ENCODE measurements at regions of chr11 and their contacts with region 1.

Region 1: DNA sequence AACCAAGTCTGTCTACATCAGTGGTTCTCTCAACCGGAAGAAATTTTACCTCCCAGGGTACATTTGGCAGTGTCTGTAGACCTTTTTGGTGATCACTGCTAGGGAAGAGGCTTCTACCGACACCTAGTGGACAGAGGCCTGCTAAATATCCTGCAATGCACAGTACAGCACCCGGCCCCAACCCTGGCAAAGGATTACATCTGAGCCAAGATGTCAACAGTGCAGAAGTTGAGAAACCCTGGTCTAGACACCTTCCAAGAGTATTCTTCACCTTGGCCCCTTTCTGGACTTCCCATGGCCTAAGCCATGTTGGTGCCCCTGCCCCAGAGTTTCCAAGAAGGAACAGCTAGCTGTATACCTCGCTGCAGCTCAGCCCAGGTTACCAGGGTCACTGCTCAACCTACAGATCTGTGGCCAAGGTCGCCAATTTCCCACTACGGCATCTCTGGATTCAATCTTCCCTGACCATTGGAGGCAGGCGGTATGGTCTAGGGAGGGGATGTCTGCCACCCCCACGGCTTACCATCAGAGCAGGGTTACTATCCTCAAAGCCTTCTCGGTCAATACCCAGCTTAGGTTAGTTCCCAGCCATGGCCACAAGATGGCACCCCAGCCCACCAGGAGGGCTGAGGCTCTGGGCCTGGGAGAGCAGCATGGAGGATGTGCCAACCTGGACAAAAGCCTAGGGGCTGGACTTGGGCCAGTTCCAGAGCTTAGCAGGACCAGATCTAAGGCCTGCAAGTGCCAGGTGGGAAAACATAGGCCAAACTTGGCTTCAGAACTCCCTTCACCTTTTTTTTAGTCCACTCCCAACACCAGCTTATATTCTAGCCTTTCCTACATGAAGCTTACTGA is 3.7 kb upstream of the KCNC1 start:
- DNase-seq: peak; percentile 90
- H3K4me3 Mint-ChIP-seq: no peak overlapping the region
- H3K27ac Mint-ChIP-seq: no peak overlapping the region
- H3K4me1 Mint-ChIP-seq: no peaks in the 10 kb centered on the region
- H3K27me3 Mint-ChIP-seq: peaks cover 44% of the 10 kb centered on the region
- CTCF ChIP-seq: peak; percentile 94

Region 2: DNA sequence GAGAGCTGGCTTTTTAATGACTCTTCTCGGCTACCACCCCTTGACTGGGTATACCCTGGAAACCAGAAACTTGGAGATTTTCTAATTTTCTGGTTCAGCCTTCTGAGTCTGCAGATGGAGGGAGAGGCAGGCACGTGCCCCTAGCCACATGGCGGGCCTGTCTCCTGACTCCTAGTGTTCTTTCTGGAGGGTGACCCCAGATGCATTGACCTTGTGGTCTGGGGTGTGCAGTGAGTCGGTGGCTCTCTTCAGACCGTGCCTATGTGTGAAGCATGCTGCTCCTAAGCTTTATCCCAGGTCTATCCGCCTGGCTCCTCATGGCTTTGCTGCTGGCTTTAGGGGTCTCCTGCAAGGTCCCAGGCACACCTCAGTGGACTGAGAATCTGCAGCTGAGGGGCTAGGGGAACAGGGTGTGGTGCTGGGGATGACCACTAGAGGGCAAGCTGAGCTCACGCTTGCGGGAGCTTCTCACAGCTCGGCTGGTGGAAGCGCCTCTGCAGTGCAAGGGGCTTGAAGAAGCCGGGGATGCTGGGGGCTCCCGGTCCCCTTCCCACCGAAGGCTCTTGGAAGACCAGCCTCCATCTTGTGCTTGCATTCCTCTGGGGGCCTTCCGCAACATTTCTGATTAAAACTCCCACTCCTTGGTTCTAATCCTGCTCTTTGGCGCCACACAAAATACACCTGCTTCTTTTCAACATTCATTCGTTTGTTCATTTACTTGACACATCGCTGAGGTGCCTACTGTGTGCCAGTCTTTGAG is 132.0 kb before region 1 on chr11:
- CTCF ChIA-PET with region 1: interaction called, 48 read pairs
- POLR2A ChIA-PET with region 1: interaction called, 3 read pairs
- intact Hi-C with region 1: loop called (anchors 1 kb)
- DNase-seq: peak; percentile 62
- H3K4me3 Mint-ChIP-seq: no peak overlapping the region
- H3K27ac Mint-ChIP-seq: no peak overlapping the region
- H3K4me1 Mint-ChIP-seq: no peaks in the 10 kb centered on the region
- H3K27me3 Mint-ChIP-seq: peaks cover 21% of the 10 kb centered on the region
- CTCF ChIP-seq: peak; percentile 89

Region 3: DNA sequence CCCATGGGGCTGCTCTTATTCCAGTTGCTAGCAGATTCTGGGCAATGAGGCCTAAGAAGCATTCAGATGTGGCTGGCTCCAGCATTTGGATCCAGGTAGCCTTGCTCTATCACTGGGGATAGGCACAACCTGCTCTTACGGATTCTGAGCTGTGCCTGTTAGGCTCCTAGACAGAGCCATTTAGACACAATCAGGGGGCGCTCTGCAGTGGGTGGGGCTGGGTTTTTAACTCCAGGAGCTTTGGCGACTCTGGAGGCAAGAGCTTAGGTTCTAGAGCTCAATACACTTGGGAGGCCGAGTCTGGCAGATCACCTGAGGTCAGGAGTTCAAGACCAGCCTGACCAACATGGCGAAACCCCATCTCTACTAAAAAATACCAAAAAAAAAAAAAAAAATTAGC is 35.8 kb after region 1 on chr11:
- CTCF ChIA-PET with region 1: interaction called, 10 read pairs
- POLR2A ChIA-PET with region 1: no interaction called
- intact Hi-C with region 1: no loop called
- DNase-seq: peak; percentile 26
- H3K4me3 Mint-ChIP-seq: no peak overlapping the region
- H3K27ac Mint-ChIP-seq: no peak overlapping the region
- H3K4me1 Mint-ChIP-seq: no peaks in the 10 kb centered on the region
- H3K27me3 Mint-ChIP-seq: no peaks in the 10 kb centered on the region
- CTCF ChIP-seq: no peak

Region 4: GRCh38 chr11:17827006-17827405 is 96.2 kb after region 1 on chr11:
- CTCF ChIA-PET with region 1: interaction called, 72 read pairs
- POLR2A ChIA-PET with region 1: interaction called, 5 read pairs
- intact Hi-C with region 1: loop called (anchors 1 kb)
- DNase-seq: peak; percentile 35
- H3K4me3 Mint-ChIP-seq: no peak overlapping the region
- H3K27ac Mint-ChIP-seq: no peak overlapping the region
- H3K4me1 Mint-ChIP-seq: no peaks in the 10 kb centered on the region
- H3K27me3 Mint-ChIP-seq: no peaks in the 10 kb centered on the region
- CTCF ChIP-seq: peak; percentile 26

Region 5: DNA sequence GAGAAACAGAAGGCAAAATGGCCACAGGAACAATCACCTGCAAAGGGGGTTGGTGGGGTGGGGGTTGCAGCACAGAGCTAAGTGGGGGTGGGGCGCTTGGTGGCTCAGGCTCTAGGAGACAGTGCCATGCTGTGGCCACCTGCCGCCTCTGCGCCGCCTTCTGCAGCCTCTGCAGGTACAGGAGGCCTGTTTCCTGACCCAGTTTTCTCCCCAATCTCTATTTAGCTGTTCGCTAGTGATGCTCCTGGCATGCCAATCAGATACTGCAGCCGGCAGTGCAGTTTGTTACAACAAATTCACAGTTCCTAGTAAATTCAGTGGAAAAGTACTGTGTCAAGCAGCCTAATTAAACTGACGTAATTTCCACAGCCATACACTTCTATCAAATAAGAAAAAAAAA is 175.6 kb after region 1 on chr11:
- CTCF ChIA-PET with region 1: interaction called, 21 read pairs
- POLR2A ChIA-PET with region 1: interaction called, 5 read pairs
- intact Hi-C with region 1: no loop called
- DNase-seq: peak; percentile 17
- H3K4me3 Mint-ChIP-seq: no peak overlapping the region
- H3K27ac Mint-ChIP-seq: no peak overlapping the region
- H3K4me1 Mint-ChIP-seq: no peaks in the 10 kb centered on the region
- H3K27me3 Mint-ChIP-seq: no peaks in the 10 kb centered on the region
- CTCF ChIP-seq: peak; percentile 14

Region 6: DNA sequence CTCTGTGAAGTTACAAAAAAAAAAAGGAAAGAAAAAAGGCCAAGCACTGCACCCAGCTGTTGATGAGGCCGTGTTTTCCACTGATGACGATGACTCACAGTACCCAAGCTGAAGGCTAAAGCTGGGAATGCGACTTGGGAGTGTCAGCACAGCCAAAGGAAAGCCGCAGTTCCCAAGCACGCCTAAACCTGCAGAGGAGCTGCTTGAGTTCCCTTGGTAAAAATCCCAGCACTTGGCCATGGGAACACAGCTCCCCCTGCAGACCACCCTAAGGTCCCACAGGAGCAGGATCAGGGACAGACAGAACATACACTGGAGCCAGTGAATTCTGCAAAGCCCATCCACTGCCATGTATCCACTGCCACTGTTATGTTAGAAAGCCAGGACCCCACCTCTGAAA is 242.2 kb after region 1 on chr11:
- CTCF ChIA-PET with region 1: interaction called, 507 read pairs
- POLR2A ChIA-PET with region 1: interaction called, 16 read pairs
- intact Hi-C with region 1: loop called (anchors 1 kb)
- DNase-seq: peak; percentile 88
- H3K4me3 Mint-ChIP-seq: no peak overlapping the region
- H3K27ac Mint-ChIP-seq: no peak overlapping the region
- H3K4me1 Mint-ChIP-seq: peaks cover 9% of the 10 kb centered on the region
- H3K27me3 Mint-ChIP-seq: no peaks in the 10 kb centered on the region
- CTCF ChIP-seq: peak; percentile 48

Region 7: GRCh38 chr11:18091731-18092130 is 360.9 kb after region 1 on chr11:
- CTCF ChIA-PET with region 1: no interaction called
- POLR2A ChIA-PET with region 1: no interaction called
- intact Hi-C with region 1: no loop called
- DNase-seq: no peak
- H3K4me3 Mint-ChIP-seq: no peak overlapping the region
- H3K27ac Mint-ChIP-seq: no peak overlapping the region
- H3K4me1 Mint-ChIP-seq: no peaks in the 10 kb centered on the region
- H3K27me3 Mint-ChIP-seq: no peaks in the 10 kb centered on the region
- CTCF ChIP-seq: no peak